ENCODE measurements at regions of chr3 and their contacts with region 1.

Region 1: DNA sequence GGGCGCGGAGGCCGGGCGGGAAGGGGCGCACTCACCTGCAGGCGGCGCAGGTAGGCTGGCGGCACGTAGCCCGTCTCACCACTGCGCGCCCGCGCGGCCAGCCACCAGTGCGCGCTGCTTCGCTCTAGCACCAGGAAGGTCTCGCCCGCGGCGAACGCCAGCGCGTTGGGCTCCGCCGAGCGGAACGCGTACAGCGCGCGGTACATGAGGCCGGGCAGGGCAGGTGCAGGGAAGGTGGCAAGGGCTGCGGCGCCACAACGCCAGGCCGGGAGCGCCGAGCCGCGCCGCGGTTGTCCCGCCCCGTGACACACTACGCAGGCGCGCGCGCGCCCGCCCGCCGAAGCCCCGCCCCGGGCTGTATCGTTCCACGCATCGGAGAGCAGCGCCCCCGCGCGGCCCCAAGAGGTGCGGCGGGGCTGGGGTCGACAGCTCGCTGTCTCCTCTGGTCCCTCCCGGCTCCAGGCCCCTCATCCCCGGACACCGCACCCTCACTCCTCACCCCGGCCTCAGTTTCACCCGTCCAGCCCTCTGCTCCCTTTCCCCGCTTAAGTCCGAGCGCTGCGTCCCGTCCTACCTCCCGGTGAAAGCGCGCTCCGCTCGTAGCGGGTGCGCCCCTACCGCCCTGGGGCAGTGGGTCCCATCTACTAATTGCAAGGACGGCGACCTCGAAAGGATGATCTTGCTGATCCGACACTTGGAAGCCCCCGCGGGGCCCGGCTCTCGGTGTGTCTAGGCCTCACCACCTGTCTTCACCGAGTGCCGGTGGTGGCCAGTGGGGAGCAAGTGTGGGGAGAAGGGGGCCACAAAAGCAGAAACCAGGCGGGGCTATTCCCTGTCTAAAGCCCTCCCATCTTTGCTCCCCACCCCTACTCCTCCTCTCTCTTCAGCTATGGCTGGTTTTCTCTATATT is at the start of gene NCKIPSD:
- DNase-seq: peak; percentile 98
- ATAC-seq: peak; percentile 94
- total RNA-seq, gene NCKIPSD: 15.4 TPM

Region 2: DNA sequence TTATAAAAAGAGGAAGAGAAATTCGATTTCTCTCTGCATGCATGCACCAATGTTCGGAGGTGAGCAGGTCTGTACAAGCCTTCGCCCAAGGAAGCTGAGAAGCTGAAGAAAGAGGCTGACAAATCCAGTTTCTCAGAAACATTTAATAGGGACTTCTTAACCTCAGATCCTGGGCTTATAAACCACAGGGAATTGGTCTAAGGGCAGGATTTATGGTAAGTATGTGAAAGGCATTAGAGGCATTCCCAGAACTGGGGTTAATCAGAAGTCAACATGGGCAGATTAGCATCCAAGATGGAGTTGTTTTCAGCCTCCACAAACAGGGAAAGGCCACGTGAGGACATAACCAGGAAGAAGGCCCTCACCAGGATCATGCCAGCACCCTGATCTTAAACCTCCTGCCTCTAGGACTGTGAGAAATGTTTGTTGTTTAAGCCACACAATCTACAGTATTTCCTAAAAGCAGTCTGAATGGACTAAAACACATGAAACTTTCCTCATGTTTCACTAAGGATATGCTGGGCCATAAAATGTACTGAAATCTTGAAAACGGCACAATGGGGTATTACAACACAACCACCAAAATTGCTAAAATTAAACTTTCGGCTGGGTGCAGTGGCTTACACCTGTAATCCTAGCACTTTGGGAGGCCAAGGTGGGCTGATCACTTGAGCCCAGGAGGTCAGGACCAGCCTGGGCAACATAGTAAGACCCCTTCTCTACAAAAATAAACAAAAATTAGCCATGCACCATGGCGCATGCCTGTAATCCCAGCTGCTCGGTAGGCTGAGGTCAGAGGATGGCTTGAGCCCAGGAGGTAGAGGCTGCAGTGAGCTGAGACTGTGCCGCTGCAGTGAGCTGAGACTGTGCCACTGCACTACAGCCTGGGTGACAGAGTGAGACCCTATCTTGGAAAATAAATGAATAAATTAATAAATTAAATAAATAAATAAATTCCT is 193.0 kb before region 1 on chr3:
- intact Hi-C with region 1: no loop called
- DNase-seq: no peak
- ATAC-seq: no peak

Region 3: GRCh38 chr3:48716982-48717746 is 31.3 kb after region 1 on chr3 and contains the start of gene IP6K2:
- intact Hi-C with region 1: loop called (anchors 2 kb)
- DNase-seq: peak; percentile 99
- ATAC-seq: peak; percentile 99
- total RNA-seq, gene IP6K2: 29.3 TPM

Region 4: GRCh38 chr3:48739955-48740823 is 54.3 kb after region 1 on chr3:
- intact Hi-C with region 1: loop called (anchors 2 kb)
- DNase-seq: peak; percentile 95
- ATAC-seq: peak; percentile 89

Measured in Right ventricle myocardium inferior (tissue), 1 donor.